SK-N-SH (cell line): ENCODE measurements at regions of chr2 and their contacts with region 1.

Region 1: DNA sequence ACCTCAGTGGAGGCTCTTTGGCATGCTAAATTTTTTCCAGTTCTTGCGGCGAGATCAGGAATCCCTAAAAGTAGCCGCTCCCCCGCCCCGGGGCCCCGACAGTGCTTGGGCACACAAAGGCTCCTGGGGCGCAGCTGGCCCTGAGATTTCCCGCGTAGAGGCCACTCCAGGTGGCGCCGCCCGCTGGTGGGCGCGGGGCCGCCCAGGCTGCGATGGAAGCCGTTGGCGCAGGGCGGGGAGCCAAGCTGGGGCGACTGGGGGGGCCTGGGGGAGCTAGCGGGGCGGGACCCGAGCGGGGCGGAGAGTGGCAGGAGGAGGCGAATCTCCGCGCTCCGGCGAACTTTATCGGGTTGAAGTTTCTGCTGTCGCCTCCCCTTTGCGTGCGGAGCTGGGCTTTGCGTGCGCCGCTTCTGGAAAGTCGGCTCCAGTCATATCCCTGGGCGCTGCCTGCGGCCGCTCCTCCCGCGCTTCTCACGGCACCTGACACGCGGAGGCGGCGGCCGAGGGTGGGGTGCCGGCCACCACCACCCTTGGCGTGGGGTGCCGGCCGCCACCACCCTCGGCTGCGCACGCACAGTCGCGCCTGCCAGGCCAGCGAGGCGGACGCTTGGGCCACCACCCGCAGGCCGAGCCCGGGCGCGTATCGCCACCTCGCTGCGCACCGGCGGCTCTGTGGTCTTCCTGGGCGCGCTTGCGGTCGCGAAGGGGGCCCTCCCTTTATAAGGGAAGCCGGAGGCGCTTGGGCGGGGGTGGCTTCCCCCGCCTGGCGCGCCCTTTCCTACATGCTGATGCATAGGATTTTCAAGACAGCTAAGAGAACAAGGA is 867 bp upstream of the CYP1B1 start:
- DNase-seq: peak; percentile 98
- H3K4me3 ChIP-seq: peak overlapping the region; percentile 68 to 70
- H3K27ac ChIP-seq: peak overlapping the region in 1 of 2 experiments; percentile 88; a peak in 2 of 4 replicates
- H3K4me1 ChIP-seq: peaks cover 0 to 13% of the 10 kb centered on the region in 2 experiments; a peak in 1 of 4 replicates
- H3K27me3 ChIP-seq: no peaks in the 10 kb centered on the region; the same call in 1 of the 2 replicates
- CTCF ChIP-seq: peak; percentile 66
- EP300 ChIP-seq: 0 out of 4 replicates have a peak, but pooled peaks of 1 of the 2 experiments have one; percentile 3
- RAD21 ChIP-seq: no peak

Region 2: GRCh38 chr2:37558623-37559022 is 518.2 kb before region 1 on chr2:
- CTCF ChIA-PET with region 1: no interaction called
- POLR2A ChIA-PET with region 1: no interaction called
- DNase-seq: no peak
- H3K4me3 ChIP-seq: no peak overlapping the region
- H3K27ac ChIP-seq: no peak overlapping the region
- H3K4me1 ChIP-seq: peaks cover 28 to 36% of the 10 kb centered on the region in 2 experiments
- H3K27me3 ChIP-seq: no peaks in the 10 kb centered on the region
- CTCF ChIP-seq: no peak
- EP300 ChIP-seq: no peak
- RAD21 ChIP-seq: no peak

Region 3: GRCh38 chr2:38026846-38027245 is 50.0 kb before region 1 on chr2:
- CTCF ChIA-PET with region 1: interaction called, 10 read pairs
- POLR2A ChIA-PET with region 1: interaction called, 3 read pairs
- DNase-seq: no peak
- H3K4me3 ChIP-seq: no peak overlapping the region
- H3K27ac ChIP-seq: peak overlapping the region in 1 of 2 experiments; percentile 50; a peak in 2 of 4 replicates
- H3K4me1 ChIP-seq: peaks cover 0 to 3% of the 10 kb centered on the region in 2 experiments; a peak in 2 of 4 replicates
- H3K27me3 ChIP-seq: no peaks in the 10 kb centered on the region
- CTCF ChIP-seq: no peak
- EP300 ChIP-seq: no peak
- RAD21 ChIP-seq: no peak

Region 4: GRCh38 chr2:38064801-38065501 is 11.9 kb before region 1 on chr2:
- CTCF ChIA-PET with region 1: interaction called, 44 read pairs
- POLR2A ChIA-PET with region 1: interaction called, 12 read pairs
- DNase-seq: no peak
- H3K4me3 ChIP-seq: no peak overlapping the region
- H3K27ac ChIP-seq: no peak overlapping the region
- H3K4me1 ChIP-seq: peaks cover 0 to 17% of the 10 kb centered on the region in 2 experiments; a peak in 2 of 4 replicates
- H3K27me3 ChIP-seq: no peaks in the 10 kb centered on the region; the same call in 1 of the 2 replicates
- CTCF ChIP-seq: no peak
- EP300 ChIP-seq: no peak
- RAD21 ChIP-seq: no peak

Region 5: GRCh38 chr2:38115216-38116032 is 38.6 kb after region 1 on chr2:
- CTCF ChIA-PET with region 1: interaction called, 157 read pairs
- POLR2A ChIA-PET with region 1: interaction called, 10 read pairs
- DNase-seq: peak; percentile 85
- H3K4me3 ChIP-seq: no peak overlapping the region; a peak in 1 of 4 replicates
- H3K27ac ChIP-seq: peak overlapping the region in 1 of 2 experiments; percentile 54; a peak in 1 of 4 replicates
- H3K4me1 ChIP-seq: peaks cover 0 to 27% of the 10 kb centered on the region in 2 experiments; a peak in 2 of 4 replicates
- H3K27me3 ChIP-seq: no peaks in the 10 kb centered on the region
- CTCF ChIP-seq: peak; percentile 98
- EP300 ChIP-seq: 0 out of 4 replicates have a peak, but pooled peaks of 1 of the 2 experiments have one; percentile 14
- RAD21 ChIP-seq: peak; percentile 99

Region 6: DNA sequence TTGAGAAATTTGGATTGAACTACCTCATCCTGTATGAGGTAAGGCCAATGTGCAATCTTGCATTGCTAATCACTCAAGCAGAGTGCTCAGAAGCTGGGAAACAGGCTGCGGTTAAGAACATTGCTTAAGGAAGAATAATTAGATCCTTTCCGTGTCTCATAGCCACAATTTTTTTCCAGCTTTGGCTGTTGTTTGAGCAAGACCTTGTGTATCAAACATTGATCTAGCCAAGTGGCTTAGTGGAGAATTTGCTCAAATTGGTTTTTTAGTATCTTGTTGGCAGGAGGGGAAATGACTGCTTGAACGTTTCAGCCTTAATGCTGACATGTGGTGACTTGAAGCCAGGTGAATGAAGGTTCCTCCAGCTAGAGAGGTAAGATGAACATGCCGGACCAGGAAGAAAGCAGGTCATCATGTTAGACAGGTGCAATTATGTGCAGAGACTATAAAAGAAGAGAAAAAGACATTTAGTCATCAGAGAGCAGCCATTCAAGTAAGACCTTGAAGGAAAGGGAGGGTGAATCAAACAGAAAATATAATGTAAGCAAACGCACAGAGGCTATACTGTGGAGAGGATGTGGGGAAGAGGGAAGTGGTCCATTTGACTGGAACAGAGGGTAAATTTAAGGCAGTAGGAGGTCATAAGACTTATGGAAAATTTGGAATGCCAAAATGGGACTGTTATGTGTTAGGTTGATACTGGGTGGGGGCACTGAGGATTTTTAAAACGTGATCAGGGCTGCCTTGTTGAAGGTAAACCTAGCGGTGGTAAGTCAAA is 98.0 kb after region 1 on chr2:
- CTCF ChIA-PET with region 1: no interaction called
- POLR2A ChIA-PET with region 1: no interaction called
- DNase-seq: no peak
- H3K4me3 ChIP-seq: no peak overlapping the region
- H3K27ac ChIP-seq: no peak overlapping the region
- H3K4me1 ChIP-seq: peaks cover 0 to 5% of the 10 kb centered on the region in 2 experiments; a peak in 1 of 4 replicates
- H3K27me3 ChIP-seq: no peaks in the 10 kb centered on the region
- CTCF ChIP-seq: no peak
- EP300 ChIP-seq: no peak
- RAD21 ChIP-seq: no peak

Region 7: GRCh38 chr2:38230756-38231155 is 153.9 kb after region 1 on chr2:
- CTCF ChIA-PET with region 1: interaction called, 11 read pairs
- POLR2A ChIA-PET with region 1: no interaction called
- DNase-seq: no peak
- H3K4me3 ChIP-seq: no peak overlapping the region
- H3K27ac ChIP-seq: no peak overlapping the region
- H3K4me1 ChIP-seq: peaks cover 0 to 2% of the 10 kb centered on the region in 2 experiments; a peak in 2 of 4 replicates
- H3K27me3 ChIP-seq: no peaks in the 10 kb centered on the region; the same call in 1 of the 2 replicates
- CTCF ChIP-seq: no peak
- EP300 ChIP-seq: no peak
- RAD21 ChIP-seq: no peak